ENCODE measurements at regions of chr1 and their contacts with region 1.

Region 1: DNA sequence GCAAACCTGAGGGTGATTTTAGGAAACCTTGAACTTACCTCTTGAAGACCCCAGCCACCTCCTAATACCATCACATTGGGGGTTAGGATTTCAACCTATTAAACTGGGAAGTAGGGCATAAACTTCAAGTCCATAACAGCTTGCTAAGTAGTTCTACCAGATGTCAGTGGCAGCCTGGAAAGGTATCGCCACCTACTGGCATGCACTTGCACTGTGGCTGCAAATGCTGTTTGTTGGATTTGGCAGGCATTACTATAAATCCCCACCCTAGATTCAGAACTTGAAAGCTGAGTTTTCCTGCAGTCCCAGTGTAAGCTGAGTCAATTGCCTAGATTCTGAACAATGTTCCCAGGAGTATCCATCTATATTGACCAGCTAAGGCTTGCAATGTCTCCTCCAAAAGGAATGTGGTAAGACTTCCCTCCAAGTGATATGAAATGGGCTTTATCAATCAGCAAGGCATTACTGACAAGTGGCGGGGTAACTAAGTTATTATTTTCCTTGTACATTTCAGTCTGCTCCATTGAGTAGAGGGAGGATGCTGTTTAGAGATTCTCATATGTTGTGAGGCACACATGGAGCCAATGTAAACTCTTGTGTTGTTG is 474.5 kb downstream of the PTPRC start:
- DNase-seq: peak; percentile 70
- H3K4me3 Mint-ChIP-seq: no peak overlapping the region
- H3K27ac Mint-ChIP-seq: no peak overlapping the region
- H3K4me1 Mint-ChIP-seq: no peaks in the 10 kb centered on the region
- H3K27me3 Mint-ChIP-seq: no peaks in the 10 kb centered on the region
- CTCF ChIP-seq: peak; percentile 82

Region 2: DNA sequence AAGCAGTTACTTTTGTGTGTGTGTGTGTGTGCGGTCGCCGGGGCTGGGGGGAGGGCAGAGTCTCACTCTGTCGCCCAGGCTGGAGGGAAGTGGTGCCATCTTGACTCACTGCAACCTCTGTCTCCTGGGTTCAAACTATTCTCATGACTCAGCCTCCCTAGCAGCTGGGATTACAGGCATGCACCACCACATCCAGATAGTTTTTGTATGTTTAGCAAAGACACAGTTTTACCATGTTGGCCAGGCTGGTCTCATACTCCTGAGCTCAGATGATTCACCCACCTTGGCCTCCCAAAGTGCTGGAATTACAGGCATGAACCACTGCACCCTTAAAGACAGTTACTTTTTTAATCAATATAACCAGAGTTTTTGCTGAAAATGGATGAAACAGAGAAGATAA is 267.5 kb before region 1 on chr1:
- CTCF ChIA-PET with region 1: interaction called, 4 read pairs
- POLR2A ChIA-PET with region 1: no interaction called
- intact Hi-C with region 1: loop called (anchors 5 kb)
- DNase-seq: no peak
- H3K4me3 Mint-ChIP-seq: no peak overlapping the region
- H3K27ac Mint-ChIP-seq: no peak overlapping the region
- H3K4me1 Mint-ChIP-seq: peaks cover 5% of the 10 kb centered on the region
- H3K27me3 Mint-ChIP-seq: no peaks in the 10 kb centered on the region
- CTCF ChIP-seq: no peak

Region 3: DNA sequence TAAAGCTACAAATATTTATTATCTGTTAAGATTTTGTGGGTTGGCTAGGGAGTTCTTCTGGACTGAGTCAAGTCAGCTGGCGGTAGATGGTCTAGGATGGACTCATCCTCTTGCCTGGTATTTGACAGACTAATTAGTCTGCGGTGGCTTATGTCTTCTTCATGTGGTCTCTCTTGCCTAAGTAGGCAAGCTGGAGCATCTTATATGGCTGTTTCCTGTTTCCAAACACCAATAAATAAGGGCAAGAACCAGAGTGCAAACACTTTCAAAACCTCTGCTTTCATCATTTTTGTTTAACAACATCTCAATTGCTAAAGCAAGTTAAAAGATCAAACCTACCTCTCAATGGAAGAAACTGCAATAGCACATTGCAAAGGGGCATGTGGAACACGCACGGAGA is 10.2 kb after region 1 on chr1:
- CTCF ChIA-PET with region 1: interaction called, 22 read pairs
- POLR2A ChIA-PET with region 1: no interaction called
- intact Hi-C with region 1: no loop called
- DNase-seq: no peak
- H3K4me3 Mint-ChIP-seq: no peak overlapping the region
- H3K27ac Mint-ChIP-seq: no peak overlapping the region
- H3K4me1 Mint-ChIP-seq: no peaks in the 10 kb centered on the region
- H3K27me3 Mint-ChIP-seq: no peaks in the 10 kb centered on the region
- CTCF ChIP-seq: no peak

Region 4: DNA sequence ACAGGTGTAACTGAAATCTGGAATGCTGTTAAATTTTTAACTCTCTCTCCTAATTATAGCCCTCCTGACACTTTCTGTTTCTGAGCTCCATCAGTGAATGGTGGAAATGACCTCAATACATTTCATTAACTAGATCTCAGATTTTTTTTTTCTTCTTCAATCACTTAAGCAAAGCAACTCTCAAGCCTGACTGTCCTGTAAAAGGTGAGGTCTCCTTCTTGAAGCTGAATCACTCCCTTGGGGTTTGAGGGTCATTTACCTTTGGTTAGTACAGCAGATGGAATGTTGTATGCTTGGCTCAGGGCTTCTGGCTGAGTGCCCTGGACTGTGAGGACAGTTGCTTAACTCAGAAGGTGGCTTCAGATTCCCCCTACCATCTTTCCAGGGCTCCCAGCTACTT is 44.1 kb after region 1 on chr1:
- CTCF ChIA-PET with region 1: no interaction called
- POLR2A ChIA-PET with region 1: no interaction called
- intact Hi-C with region 1: no loop called
- DNase-seq: peak; percentile 54
- H3K4me3 Mint-ChIP-seq: no peak overlapping the region
- H3K27ac Mint-ChIP-seq: no peak overlapping the region
- H3K4me1 Mint-ChIP-seq: peaks cover 6% of the 10 kb centered on the region
- H3K27me3 Mint-ChIP-seq: no peaks in the 10 kb centered on the region
- CTCF ChIP-seq: no peak

Region 5: GRCh38 chr1:199463521-199464128 is 350.3 kb after region 1 on chr1:
- CTCF ChIA-PET with region 1: interaction called, 4 read pairs
- POLR2A ChIA-PET with region 1: no interaction called
- intact Hi-C with region 1: loop called (anchors 2 kb)
- DNase-seq: peak; percentile 80
- H3K4me3 Mint-ChIP-seq: no peak overlapping the region
- H3K27ac Mint-ChIP-seq: no peak overlapping the region
- H3K4me1 Mint-ChIP-seq: no peaks in the 10 kb centered on the region
- H3K27me3 Mint-ChIP-seq: no peaks in the 10 kb centered on the region
- CTCF ChIP-seq: peak; percentile 79

Region 6: DNA sequence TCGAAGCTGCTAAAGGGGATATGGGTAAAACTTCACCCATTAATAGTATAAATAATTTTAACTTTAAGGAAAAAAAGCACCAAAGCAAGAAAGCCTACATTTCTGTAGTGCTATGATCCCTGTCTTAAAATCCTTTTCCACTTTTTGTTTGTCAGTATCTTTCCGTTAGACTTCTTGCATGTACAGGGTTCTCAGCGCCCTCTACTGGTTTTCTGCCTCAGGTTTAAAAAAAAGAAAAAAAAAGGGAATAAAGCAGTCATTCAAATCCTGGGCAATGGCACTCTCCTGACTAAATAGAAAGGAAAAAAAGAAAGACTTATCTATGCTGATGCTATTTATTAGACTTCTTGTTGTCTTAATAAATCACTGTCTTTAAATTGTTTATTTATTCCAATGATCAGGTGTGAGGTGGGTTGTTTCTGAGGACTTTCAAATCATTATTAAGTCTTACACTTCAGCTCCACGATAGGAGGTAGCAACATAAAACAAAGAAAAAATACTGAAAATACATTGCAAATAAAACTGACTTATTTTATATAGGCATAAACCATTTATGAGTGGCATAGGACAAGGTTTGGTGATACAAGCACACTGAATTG is 438.7 kb after region 1 on chr1:
- CTCF ChIA-PET with region 1: interaction called, 4 read pairs
- POLR2A ChIA-PET with region 1: no interaction called
- intact Hi-C with region 1: loop called (anchors 5 kb)
- DNase-seq: peak; percentile 74
- H3K4me3 Mint-ChIP-seq: no peak overlapping the region
- H3K27ac Mint-ChIP-seq: no peak overlapping the region
- H3K4me1 Mint-ChIP-seq: no peaks in the 10 kb centered on the region
- H3K27me3 Mint-ChIP-seq: no peaks in the 10 kb centered on the region
- CTCF ChIP-seq: peak; percentile 96